B cell (primary cell): ENCODE measurements at regions of chr19 and their contacts with region 1.

Region 1: DNA sequence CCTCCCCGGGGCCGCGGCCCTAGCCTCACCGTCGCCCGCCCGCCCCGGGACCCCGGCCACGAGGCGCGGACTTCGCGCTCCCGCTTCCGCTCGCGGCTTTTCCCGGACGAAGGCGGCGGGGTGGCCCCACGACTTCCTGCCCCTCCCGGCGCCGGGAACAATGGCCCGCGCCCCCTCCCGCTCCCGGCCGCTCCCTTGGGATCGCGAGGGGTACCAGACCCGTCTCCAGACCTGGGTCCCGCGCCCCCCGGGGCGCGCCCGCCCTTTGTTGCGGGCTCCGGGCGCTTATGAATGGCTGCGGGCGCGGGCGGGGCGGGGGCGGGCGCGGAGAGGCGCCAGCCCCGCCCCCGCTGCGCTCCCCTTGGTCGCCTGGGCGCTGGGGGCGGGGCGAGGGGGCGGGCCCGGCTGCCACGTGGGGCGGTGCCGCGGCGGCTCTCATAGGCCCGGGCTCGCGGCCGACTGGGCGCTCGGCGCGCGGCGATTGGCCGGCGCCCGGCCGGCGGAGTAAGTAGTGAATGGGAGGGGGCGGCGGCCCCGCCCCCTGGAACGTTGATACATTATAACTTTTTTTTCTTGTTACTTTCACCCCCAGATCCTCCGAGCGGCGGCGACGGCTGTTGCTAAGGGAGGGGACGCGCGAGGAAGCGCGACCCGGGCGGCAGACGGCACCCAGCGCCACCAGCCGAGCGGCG is 1.1 kb downstream of the MIDN start:
- DNase-seq: peak; percentile 98
- ATAC-seq: peak; percentile 48
- H3K4me3 ChIP-seq: peak overlapping the region in 4 of 5 experiments; percentile 72 to 92 (median 88)
- H3K4me3 Mint-ChIP-seq: peak overlapping the region; percentile 86
- H3K27ac ChIP-seq: peak overlapping the region; percentile 73 to 94
- H3K27ac Mint-ChIP-seq: peak overlapping the region; percentile 92
- H3K4me1 ChIP-seq: peaks cover 29 to 56% of the 10 kb centered on the region in 2 donors
- H3K4me1 Mint-ChIP-seq: peaks cover 27% of the 10 kb centered on the region
- H3K27me3 ChIP-seq: no peaks in the 10 kb centered on the region
- H3K27me3 Mint-ChIP-seq: no peaks in the 10 kb centered on the region
- CTCF ChIP-seq: no peak

Region 2: DNA sequence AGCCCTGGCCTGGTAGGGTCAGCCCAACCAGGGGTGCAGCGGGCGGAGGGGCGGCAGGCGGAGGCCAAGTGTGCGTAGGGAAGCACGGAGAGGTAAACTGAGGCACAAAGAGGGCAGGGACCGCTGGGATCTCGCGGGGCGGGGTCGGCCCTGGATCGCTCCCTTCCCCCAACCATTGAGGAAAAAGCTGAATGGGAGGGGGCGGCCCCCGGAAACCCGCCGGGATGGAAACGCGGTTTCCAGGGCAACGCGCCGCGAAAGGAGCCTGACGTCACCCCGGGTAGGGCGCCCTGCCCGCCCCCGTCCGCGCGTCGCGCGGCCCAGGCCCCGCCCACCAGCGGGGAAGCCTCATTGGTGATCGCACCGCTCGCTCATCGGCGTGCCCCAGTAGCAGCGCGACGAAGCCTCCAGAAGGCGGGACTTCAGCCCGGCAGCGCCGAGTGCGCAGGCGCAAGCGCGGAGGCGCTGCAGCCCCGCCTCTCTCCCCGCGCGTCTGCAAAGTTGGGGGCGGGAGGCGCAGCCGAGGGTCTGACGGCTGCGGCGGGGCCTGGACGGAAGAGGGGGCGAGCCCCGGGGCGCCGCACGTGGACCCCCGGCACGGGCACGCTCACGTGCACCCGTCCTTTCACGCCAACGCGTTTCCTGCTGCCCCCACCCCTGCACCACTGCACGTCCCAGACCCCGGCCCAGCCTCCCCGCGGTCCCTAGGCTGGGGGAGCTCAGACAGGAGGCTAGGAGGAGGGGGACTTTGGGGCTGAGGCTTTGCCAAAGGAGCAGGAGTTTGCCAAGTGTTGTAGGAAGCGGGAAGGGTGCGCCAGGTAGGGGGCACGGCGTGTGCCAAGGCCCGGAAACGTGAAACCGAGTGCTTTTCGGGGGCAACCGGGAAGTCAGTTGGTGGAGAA is 11.4 kb after region 1 on chr19:
- CTCF ChIA-PET with region 1: interaction called, 658 read pairs
- POLR2A ChIA-PET with region 1: interaction called, 402 read pairs
- intact Hi-C with region 1: loop called (anchors 1 kb)
- DNase-seq: peak; percentile 98
- ATAC-seq: peak; percentile 59
- H3K4me3 ChIP-seq: peak overlapping the region; percentile 61 to 95 (median 81)
- H3K4me3 Mint-ChIP-seq: peak overlapping the region; percentile 97
- H3K27ac ChIP-seq: peak overlapping the region; percentile 99 to 100
- H3K27ac Mint-ChIP-seq: peak overlapping the region; percentile 99
- H3K4me1 ChIP-seq: peaks cover 68 to 91% of the 10 kb centered on the region in 2 donors
- H3K4me1 Mint-ChIP-seq: peaks cover 78% of the 10 kb centered on the region
- H3K27me3 ChIP-seq: no peaks in the 10 kb centered on the region
- H3K27me3 Mint-ChIP-seq: no peaks in the 10 kb centered on the region
- CTCF ChIP-seq: no peak

Region 3: GRCh38 chr19:1269065-1269477 is 19.6 kb after region 1 on chr19 and contains the start of gene CIRBP:
- CTCF ChIA-PET with region 1: interaction called, 658 read pairs
- POLR2A ChIA-PET with region 1: interaction called, 402 read pairs
- intact Hi-C with region 1: loop called (anchors 1 kb)
- DNase-seq: peak; percentile 100
- ATAC-seq: peak; percentile 66
- H3K4me3 ChIP-seq: peak within 1 kb of the TSS; percentile 75 to 96 (median 85)
- H3K4me3 Mint-ChIP-seq: peak within 1 kb of the TSS; percentile 95
- H3K27ac ChIP-seq: peak within 1 kb of the TSS; percentile 88 to 92
- H3K27ac Mint-ChIP-seq: peak within 1 kb of the TSS; percentile 95
- H3K4me1 ChIP-seq: peaks cover 67 to 86% of the 10 kb centered on the region in 2 donors
- H3K4me1 Mint-ChIP-seq: peaks cover 80% of the 10 kb centered on the region
- H3K27me3 ChIP-seq: no peaks in the 10 kb centered on the region
- H3K27me3 Mint-ChIP-seq: no peaks in the 10 kb centered on the region
- CTCF ChIP-seq: no peak
- total RNA-seq, gene CIRBP: 643 and 648 TPM in 2 replicates

Region 4: DNA sequence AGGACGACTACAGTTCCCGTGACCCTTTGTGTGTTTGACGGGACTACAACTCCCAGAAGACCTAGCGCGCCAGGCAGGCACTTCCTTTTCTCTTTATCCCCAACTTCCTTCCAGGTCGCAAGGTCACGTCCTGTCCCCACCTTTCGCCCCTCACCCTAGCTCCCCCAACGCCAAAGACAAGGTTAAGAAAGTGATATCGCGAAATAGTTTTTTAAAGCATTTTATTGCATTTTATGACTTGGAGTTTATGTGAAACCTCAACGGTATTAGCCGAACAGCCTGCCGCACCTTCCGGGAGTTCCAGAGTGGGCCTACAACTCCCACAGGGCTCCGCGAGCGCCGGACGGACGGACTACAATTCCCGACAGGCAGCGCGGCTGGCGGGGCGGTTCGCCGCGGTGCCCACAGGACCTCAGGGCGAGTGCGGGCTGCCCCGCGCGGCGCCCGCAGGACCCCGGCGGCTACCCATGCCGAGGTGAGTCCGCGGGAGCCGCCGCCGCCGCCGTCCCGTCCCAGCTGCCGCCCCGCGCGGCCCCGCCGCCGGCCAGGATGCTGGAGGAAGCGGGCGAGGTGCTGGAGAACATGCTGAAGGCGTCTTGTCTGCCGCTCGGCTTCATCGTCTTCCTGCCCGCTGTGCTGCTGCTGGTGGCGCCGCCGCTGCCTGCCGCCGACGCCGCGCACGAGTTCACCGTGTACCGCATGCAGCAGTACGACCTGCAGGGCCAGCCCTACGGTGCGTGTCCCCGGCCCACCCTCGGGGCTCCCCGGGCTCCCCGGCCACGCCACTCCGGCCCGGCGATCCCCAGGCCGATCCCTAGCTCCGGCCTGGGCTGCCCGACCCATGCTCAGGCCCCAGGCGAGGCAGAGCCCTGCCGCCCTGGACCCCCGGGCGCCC is 1936.3 kb after region 1 on chr19 and contains the start of gene NCLN:
- CTCF ChIA-PET with region 1: no interaction called
- POLR2A ChIA-PET with region 1: no interaction called
- intact Hi-C with region 1: loop called (anchors 10 kb)
- DNase-seq: peak; percentile 98
- ATAC-seq: peak; percentile 88
- H3K4me3 ChIP-seq: peak within 1 kb of the TSS; percentile 61 to 88 (median 79)
- H3K4me3 Mint-ChIP-seq: peak within 1 kb of the TSS; percentile 93
- H3K27ac ChIP-seq: peak within 1 kb of the TSS; percentile 62 to 77
- H3K27ac Mint-ChIP-seq: peak within 1 kb of the TSS; percentile 94
- H3K4me1 ChIP-seq: peaks cover 51 to 83% of the 10 kb centered on the region in 2 donors
- H3K4me1 Mint-ChIP-seq: peaks cover 66% of the 10 kb centered on the region
- H3K27me3 ChIP-seq: no peaks in the 10 kb centered on the region
- H3K27me3 Mint-ChIP-seq: no peaks in the 10 kb centered on the region
- CTCF ChIP-seq: no peak
- total RNA-seq, gene NCLN: 53.6 and 55.0 TPM in 2 replicates